Transverse colon (tissue), 4 donors: ENCODE measurements at regions of chr10 and their contacts with region 1.

Region 1: DNA sequence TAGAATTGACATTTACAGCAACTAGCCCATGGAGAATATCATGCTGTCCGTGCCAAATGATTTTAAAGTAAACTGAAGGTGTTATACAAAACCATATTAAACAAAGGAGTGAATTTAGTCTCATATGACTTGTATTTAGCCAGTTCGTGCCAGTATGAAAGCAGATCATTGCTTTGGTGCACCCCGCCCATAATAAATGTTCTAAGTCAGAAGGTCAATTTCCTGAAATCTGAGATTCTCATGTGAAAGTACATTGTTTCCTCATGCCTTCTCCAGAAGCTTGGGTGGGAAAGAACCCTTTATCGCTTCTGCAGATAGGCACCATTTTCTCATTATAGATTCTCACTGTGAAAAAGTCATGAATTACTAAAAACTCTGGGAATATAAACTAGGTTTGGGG is 106.4 kb downstream of the CAMK1D start:
- DNase-seq: no peak
- H3K4me3 ChIP-seq: no peak overlapping the region
- H3K27ac ChIP-seq: peak overlapping the region; percentile 73 to 83 (median 80)
- H3K4me1 ChIP-seq: peaks cover 6 to 28% (median 20%) of the 10 kb centered on the region in 4 donors
- H3K27me3 ChIP-seq: no peaks in the 10 kb centered on the region
- CTCF ChIP-seq: no peak
- EP300 ChIP-seq: no peak
- POLR2A ChIP-seq: no peak

Region 2: GRCh38 chr10:12588120-12588860 is 132.5 kb after region 1 on chr10:
- in situ Hi-C with region 1: no loop called
- intact Hi-C with region 1: no loop called
- DNase-seq: peak; percentile 24
- H3K4me3 ChIP-seq: no peak overlapping the region
- H3K27ac ChIP-seq: peak overlapping the region in 3 of 4 donors; percentile 3 to 27 (median 23)
- H3K4me1 ChIP-seq: peaks cover 0 to 11% (median 6%) of the 10 kb centered on the region in 4 donors
- H3K27me3 ChIP-seq: no peaks in the 10 kb centered on the region
- CTCF ChIP-seq: no peak
- EP300 ChIP-seq: no peak
- POLR2A ChIP-seq: no peak

Region 3: GRCh38 chr10:12628964-12629766 is 173.4 kb after region 1 on chr10:
- in situ Hi-C with region 1: no loop called
- intact Hi-C with region 1: loop called (anchors 10 kb)
- DNase-seq: peak; percentile 51
- H3K4me3 ChIP-seq: no peak overlapping the region
- H3K27ac ChIP-seq: peak overlapping the region; percentile 68 to 80 (median 75)
- H3K4me1 ChIP-seq: peaks cover 2 to 46% (median 32%) of the 10 kb centered on the region in 4 donors
- H3K27me3 ChIP-seq: no peaks in the 10 kb centered on the region
- CTCF ChIP-seq: no peak
- EP300 ChIP-seq: no peak
- POLR2A ChIP-seq: no peak